Astrocyte of the cerebellum (primary cell): ENCODE measurements at regions of chr11 and their contacts with region 1.

Region 1: GRCh38 chr11:18111005-18111404 is 5.1 kb upstream of the SAAL1 start:
- DNase-seq: no peak
- H3K4me3 ChIP-seq: no peak overlapping the region
- CTCF ChIP-seq: no peak

Region 2: DNA sequence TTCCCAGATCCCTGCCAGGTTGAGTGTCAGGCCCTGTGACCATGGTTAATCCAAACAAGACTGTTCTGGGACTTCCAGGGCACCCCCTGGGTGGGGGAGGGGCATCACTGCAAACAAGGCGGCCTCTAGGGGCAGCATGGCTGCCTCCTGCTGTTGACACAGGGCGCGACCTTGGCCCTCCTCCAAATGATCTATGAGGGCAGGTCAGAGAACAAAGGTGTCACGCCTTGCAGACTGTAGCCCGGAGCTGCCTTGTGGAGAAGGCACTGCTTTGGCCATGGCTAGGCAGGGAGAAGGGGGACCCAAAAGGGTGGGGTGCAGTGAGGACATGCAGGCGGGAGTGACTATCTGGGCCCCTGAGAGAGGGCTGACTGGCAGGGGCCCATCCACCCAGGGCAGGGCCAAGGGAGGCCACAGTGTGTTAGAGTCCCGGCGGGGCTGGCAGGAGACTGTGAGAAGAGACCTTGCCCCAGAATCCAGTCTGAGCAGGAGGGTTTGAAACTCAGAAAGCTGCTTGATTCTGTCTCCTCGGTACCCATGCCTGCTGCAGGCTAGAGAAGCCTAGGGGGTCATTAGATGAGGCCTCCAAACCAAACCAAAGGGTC is 340.9 kb before region 1 on chr11:
- in situ Hi-C with region 1: no loop called
- DNase-seq: no peak
- H3K4me3 ChIP-seq: no peak overlapping the region
- CTCF ChIP-seq: no peak

Region 3: DNA sequence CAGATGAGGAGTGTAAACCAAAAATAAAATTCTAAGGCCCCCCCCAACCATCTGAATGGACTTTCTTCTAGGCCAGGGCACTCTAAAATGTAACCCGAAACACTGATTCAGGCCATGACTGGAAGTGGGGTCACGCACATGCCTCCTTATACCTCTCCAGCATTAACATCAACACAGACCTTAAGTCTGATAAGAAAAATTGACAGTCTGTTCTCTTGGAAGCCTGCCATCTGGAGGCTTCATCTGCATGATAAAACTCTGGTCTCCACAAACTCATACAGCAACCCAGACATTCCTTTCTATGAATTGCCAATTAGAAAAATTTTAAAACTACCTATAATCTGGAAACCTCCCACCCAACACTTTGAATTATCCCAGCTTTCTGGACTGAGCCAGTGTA is 94.2 kb before region 1 on chr11:
- in situ Hi-C with region 1: loop called (anchors 5 kb)
- DNase-seq: no peak
- H3K4me3 ChIP-seq: no peak overlapping the region
- CTCF ChIP-seq: no peak

Region 4: DNA sequence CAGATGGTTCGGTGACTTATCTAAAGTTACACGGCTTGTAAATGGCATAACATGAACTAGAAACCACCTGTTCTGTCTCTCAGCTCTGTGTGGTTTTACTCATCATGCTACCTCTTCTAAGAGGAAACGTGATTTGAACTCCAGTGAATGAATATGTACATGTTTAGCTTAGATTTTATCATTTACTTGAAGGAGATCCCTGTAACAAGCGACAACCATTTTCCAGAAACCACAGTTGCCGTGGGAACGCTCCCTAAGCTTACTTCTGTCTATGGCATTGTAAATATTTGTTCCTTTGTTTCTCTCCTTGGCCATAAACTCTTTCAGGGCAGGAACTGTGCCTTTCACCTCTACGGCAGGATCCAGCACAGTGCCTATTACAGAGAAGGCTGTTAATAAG is 47.9 kb before region 1 on chr11:
- in situ Hi-C with region 1: loop called (anchors 5 kb)
- DNase-seq: no peak
- H3K4me3 ChIP-seq: no peak overlapping the region
- CTCF ChIP-seq: no peak

Region 5: DNA sequence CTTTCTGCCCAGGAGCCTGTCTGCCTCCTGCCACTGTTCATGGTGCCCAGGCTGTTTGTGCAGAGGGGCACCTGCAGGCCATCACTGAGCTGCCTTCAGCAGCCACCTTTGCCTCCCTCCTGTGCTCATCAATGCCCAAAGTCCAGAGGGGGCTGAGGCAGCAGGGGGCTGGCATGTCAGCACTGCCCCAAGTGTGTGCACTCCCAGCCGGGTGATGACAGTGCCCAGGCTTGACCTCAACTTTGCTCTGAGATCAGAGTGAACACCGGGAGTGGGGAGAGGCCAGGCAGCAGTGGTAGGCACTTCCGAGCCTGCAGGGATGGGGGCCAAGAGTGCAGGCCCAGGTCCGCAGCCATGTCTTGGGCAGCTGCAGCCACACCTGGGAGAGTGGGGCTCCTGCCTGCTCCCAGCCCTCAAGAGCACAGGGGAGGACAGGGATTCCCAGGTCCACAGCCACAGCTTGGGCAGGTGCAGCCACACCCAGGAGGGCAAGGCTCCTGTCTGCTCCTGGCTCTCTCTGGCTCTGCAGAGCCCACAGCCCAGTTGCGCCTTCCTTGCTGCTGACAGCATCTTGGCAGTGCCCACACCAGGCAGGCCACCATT is 110.4 kb after region 1 on chr11:
- in situ Hi-C with region 1: no loop called
- DNase-seq: no peak
- H3K4me3 ChIP-seq: no peak overlapping the region
- CTCF ChIP-seq: no peak